BJ (cell line): ENCODE measurements at regions of chrX and their contacts with region 1.

Region 1: DNA sequence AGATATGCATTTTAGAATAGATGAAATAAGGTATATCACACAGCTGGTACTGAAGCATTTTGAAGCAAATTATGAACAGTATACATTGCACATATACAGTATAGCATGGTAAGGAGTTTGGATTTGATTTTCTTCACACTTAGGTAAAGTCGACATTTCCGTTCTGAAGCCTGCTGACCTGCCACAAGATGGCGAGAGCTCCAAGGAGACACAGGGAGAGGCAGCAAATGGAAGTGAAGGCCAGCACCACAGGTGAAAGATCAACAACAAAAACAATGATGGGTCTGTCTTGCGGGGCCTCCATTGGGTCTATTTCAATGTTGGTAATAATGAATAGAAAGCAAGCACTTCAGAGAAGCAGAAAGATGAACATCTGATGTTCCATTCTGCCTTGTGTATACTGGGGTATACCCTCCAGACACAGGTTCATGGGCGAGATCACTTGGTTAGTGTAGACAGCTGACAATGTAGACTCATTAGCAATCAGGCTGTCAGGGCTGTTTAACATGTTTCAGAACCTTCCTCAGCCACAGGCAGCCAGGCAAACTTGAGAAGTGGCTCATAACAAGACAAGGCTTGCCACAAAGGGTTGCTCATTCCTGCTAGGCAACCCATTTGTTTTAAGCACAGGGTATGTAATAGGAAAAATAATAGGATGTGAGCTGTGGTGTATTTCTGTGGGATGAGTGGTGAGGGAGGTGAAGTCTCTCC is 21.4 kb upstream of the NOX1 start:
- DNase-seq: no peak
- H3K4me3 ChIP-seq: no peak overlapping the region
- H3K27me3 ChIP-seq: no peaks in the 10 kb centered on the region
- CTCF ChIP-seq: peak; percentile 60

Region 2: DNA sequence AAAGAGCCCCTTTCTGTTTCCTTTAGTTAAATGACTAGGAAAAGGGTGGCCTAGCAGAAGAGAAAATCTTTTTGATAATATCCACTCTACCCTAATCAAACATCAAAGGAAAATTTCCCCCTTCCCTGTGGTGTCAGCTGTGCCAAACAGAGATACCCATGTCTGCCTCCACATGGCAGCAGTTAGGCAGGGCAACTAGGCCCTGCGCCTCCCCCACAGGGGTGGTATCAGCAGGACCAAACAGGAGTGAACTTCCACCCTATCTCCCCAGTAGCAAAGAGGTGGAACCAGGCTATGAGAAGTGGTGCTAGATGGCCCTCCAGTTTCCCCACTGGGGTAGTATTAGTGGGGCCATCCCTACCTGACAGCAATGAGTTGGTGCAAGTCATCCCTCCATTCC is 53.0 kb after region 1 on chrX:
- CTCF ChIA-PET with region 1: no interaction called
- POLR2A ChIA-PET with region 1: no interaction called
- DNase-seq: no peak
- H3K4me3 ChIP-seq: no peak overlapping the region
- H3K27me3 ChIP-seq: no peaks in the 10 kb centered on the region
- CTCF ChIP-seq: no peak

Region 3: GRCh38 chrX:101287402-101287801 is 391.9 kb after region 1 on chrX:
- CTCF ChIA-PET with region 1: interaction called, 14 read pairs
- POLR2A ChIA-PET with region 1: no interaction called
- DNase-seq: peak; percentile 7
- H3K4me3 ChIP-seq: no peak overlapping the region
- H3K27me3 ChIP-seq: no peaks in the 10 kb centered on the region
- CTCF ChIP-seq: peak; percentile 62